Aorta (tissue), 5 donors: ENCODE measurements at regions of chr3 and their contacts with region 1.

Region 1: DNA sequence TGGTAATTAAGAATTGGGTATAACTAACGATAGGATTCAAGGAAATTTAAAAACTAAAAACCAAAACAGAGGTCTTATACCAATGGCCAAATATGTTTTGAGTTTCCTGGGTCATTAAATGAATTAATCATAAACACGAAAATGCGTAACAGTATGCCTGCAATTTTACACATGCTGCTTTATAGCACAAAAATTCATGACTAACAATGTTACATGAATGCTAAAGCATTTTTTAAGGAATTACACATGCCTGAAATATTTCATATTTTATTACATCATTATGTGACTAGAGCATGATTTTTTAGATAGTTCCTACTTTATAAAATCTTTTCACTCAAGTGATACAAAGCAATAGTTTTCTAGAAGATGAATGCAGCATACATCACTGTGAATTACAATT is 74.7 kb downstream of the ZNF148 start:
- DNase-seq: no peak
- ATAC-seq: no peak
- H3K4me3 ChIP-seq: no peak overlapping the region
- H3K27ac ChIP-seq: no peak overlapping the region
- H3K4me1 ChIP-seq: no peaks in the 10 kb centered on the region
- H3K27me3 ChIP-seq: no peaks in the 10 kb centered on the region

Region 2: DNA sequence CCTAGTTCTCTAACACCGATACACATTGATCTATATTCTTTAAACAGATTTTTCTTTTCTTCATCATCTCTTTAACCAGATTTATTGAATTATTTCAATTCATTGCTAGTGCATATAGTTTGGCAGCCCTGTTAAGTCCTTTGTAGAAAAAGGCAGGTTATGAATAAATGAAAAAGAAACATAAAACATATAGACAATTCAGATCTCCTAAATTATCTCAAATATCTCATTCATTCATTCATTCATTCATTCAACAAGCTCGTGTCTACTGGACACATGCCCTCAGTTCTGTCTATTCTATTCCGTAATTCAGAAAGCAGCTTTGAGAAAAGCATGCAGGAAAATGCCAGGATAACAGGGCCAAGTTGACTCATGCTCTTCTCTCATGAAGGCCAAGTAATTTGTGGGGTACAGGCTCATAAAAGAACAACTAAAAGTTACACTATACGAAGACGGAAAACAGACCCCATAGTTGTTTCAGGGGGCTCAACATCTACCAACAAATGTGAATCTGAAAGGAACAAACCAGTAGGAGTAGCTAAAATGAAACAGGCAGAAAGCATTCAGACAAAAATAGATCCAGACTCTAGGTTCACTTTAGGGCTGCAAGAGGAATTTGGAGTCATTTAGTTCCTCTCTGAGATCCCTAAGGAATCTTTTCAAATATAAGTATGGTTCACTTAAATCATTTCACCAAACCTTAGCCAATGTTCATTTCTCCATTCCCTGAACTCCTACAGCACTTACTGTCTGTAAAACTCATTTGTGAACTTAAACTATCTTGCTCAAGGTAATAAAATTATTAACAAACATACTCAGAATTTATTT is 67.2 kb after region 1 on chr3:
- intact Hi-C with region 1: loop called in 1 of 2 experiments (anchors 10 kb)
- DNase-seq: no peak
- ATAC-seq: no peak
- H3K4me3 ChIP-seq: peak overlapping the region in 1 of 2 donors; percentile 69
- H3K27ac ChIP-seq: no peak overlapping the region
- H3K4me1 ChIP-seq: peaks cover 0 to 3% of the 10 kb centered on the region in 2 donors
- H3K27me3 ChIP-seq: no peaks in the 10 kb centered on the region